ENCODE measurements at regions of chr1 and their contacts with region 1.

Region 1: DNA sequence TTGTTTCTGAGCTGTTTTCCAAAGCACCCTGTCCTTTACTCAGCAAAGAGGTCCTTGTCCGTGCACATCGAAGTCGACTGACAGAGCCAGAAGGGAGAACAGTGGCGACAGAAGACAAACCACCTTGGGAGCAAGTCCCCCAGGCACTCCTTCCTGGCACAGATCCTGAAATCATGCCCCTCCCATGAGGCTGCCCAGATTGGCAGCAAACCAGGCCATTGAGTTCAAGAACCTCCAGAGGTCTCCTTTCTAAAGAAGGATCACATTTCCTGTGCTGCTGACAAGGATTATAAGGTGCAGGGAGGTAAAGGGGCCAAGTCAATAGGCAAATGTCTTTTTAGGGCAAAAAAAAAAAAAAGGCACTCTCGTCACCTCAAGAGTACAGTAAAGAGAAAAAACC is 84.7 kb upstream of the HIVEP3 start:
- DNase-seq: peak; percentile 26 to 58
- H3K4me3 ChIP-seq: no peak overlapping the region
- H3K27ac ChIP-seq: no peak overlapping the region
- H3K4me1 ChIP-seq: no peaks in the 10 kb centered on the region
- H3K27me3 ChIP-seq: no peaks in the 10 kb centered on the region
- CTCF ChIP-seq: no peak
- POLR2A ChIP-seq: no peak

Region 2: DNA sequence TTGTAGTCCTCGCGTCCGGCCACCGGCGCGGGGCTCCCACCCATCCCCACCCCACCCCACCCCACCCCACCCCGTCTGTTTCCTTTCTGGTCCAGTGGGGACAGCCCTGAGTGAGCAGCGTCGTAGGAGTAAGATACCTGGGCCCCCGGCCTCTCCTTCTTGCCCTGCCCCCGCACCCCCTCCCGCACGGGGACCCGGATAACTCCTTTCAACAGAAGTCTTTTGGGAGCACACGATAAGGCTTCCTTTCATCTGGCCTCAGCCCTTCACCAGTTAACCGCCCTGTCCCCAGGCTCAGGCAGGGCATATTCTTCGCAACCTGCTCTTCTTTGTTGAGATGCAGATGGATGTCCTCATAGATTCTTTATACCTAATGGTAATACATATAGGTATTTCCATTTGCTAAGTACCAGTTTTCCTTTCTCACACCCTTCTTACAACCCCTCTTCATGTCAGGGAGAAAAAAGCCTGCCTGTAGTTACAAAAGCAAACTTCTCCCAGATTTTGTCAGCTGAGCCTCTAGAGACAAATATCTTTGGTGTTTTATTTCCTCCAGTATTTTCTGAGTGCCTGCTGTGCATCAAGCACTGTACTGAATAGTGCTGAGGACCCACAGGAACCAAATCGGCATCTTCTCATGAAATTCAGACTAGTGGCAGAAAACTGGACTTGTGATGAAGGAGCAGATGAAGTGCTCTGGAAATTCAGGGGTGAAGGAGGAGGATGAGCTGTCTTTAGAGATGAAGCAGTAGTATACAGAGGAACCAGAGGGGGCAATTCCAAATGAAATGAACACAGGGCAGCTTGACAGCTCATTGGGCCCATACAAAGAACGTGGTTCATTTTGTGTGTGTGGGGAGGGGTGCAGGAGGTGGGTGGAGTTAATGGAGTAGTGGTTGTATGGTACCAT is 921.7 kb after region 1 on chr1:
- intact Hi-C with region 1: loop called (anchors 5 kb)
- DNase-seq: no peak
- H3K4me3 ChIP-seq: peak overlapping the region; percentile 66 to 94 (median 77)
- H3K27ac ChIP-seq: peak overlapping the region; percentile 89 to 92
- H3K4me1 ChIP-seq: no peaks in the 10 kb centered on the region
- H3K27me3 ChIP-seq: no peaks in the 10 kb centered on the region
- CTCF ChIP-seq: no peak
- POLR2A ChIP-seq: no peak